Common myeloid progenitor, CD34-positive (primary cell): ENCODE measurements at regions of chr2 and their contacts with region 1.

Region 1: GRCh38 chr2:215900203-215900611 is 113.1 kb downstream of the MREG start:
- DNase-seq: peak in 2 of 3 donors; percentile 32 to 43
- H3K4me3 ChIP-seq: peak overlapping the region in 2 of 7 experiments; percentile 20 to 21
- H3K27ac ChIP-seq: no peak overlapping the region
- H3K4me1 ChIP-seq: peaks cover 7 to 26% (median 20%) of the 10 kb centered on the region in 4 experiments
- H3K27me3 ChIP-seq: no peaks in the 10 kb centered on the region

Region 2: DNA sequence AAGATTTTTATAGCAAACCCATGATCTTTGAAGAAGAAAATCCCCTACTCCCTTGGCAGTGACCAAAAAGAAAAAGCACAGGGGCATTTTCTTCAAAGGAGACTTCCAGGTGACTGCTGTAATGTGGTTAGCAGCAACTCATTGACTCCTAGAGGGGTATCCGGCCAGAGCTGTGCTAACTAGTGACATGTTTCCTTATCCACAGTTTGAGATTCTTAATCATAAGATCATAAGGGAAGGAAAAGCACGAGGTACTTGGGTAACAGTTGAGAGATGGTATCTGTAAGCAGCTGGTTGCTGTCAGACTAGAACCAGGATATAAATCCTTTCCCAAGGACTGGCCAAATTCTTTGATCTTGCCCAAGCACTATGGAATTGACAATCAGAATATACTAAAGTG is 11.5 kb before region 1 on chr2:
- CTCF ChIA-PET with region 1: interaction called, 17 read pairs
- POLR2A ChIA-PET with region 1: no interaction called
- DNase-seq: peak; percentile 63 to 92 (median 84)
- H3K4me3 ChIP-seq: no peak overlapping the region
- H3K27ac ChIP-seq: no peak overlapping the region
- H3K4me1 ChIP-seq: peaks cover 0 to 23% (median 15%) of the 10 kb centered on the region in 4 experiments
- H3K27me3 ChIP-seq: no peaks in the 10 kb centered on the region

Region 3: GRCh38 chr2:215940645-215941184 is 40.5 kb after region 1 on chr2:
- CTCF ChIA-PET with region 1: no interaction called
- POLR2A ChIA-PET with region 1: no interaction called
- DNase-seq: no peak
- H3K4me3 ChIP-seq: no peak overlapping the region
- H3K27ac ChIP-seq: no peak overlapping the region
- H3K4me1 ChIP-seq: no peaks in the 10 kb centered on the region
- H3K27me3 ChIP-seq: no peaks in the 10 kb centered on the region